ENCODE measurements at regions of chr4 and their contacts with region 1.

Region 1: DNA sequence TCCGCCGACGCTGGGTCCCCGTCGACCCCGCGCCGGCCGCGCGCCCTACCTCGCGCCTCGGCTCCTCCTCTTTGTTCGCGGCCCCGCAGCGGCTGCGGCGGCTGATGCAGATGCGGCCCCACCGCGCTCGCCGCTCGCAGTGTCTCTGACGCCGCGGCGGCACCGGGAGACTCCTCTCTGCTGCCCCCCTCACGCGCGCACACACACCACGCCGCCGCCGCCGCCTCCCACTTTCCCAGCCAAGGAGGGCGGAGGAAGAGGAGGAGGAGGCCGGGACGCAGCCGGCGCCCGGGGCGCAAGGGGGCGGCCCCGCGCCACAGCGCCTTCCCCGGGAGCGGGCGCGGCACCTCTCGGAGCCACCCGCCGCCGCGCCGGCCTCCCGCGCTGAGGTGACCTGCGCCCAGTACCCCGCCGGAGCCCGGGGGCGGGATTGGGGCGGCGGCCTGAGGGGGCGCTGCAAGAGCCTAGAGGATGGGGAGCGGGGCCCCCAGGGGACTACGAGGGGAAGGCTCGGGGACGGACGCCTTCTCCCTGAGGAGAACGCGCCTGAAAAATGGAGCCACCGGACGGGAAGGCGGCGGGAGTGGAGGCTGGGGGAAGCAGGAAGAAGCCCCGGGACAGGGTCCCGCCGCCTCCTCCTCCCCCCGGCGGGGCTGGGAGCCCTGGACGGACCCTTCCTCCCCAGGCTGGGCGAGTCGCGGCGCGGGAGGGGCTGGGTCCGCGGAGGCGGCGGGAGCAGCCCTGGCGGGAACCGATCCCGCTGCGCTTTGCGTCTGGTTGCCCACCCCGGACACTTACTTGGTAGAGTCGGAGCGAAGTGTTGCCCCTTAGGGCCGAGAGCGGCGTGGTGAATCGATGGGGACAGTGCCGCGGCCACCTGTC is at the start of gene SH3RF1:
- DNase-seq: peak; percentile 56
- ATAC-seq: peak; percentile 60
- H3K4me3 Mint-ChIP-seq: peak within 1 kb of the TSS; percentile 89
- H3K27ac Mint-ChIP-seq: peak within 1 kb of the TSS; percentile 75
- H3K4me1 Mint-ChIP-seq: peaks cover 25% of the 10 kb centered on the region
- H3K27me3 Mint-ChIP-seq: peaks cover 4% of the 10 kb centered on the region
- CTCF ChIP-seq: no peak
- total RNA-seq, gene SH3RF1: 6.9 and 7.1 TPM in 2 replicates

Region 2: GRCh38 chr4:168318266-168318895 is 952.7 kb before region 1 on chr4 and contains the start of gene DDX60:
- CTCF ChIA-PET with region 1: no interaction called
- POLR2A ChIA-PET with region 1: no interaction called
- intact Hi-C with region 1: loop called (anchors 5 kb)
- DNase-seq: peak; percentile 68
- ATAC-seq: peak; percentile 92
- H3K4me3 Mint-ChIP-seq: peak within 1 kb of the TSS; percentile 95
- H3K27ac Mint-ChIP-seq: peak within 1 kb of the TSS; percentile 96
- H3K4me1 Mint-ChIP-seq: peaks cover 20% of the 10 kb centered on the region
- H3K27me3 Mint-ChIP-seq: no peaks in the 10 kb centered on the region
- CTCF ChIP-seq: no peak
- total RNA-seq, gene DDX60: 17.6 and 17.9 TPM in 2 replicates

Region 3: DNA sequence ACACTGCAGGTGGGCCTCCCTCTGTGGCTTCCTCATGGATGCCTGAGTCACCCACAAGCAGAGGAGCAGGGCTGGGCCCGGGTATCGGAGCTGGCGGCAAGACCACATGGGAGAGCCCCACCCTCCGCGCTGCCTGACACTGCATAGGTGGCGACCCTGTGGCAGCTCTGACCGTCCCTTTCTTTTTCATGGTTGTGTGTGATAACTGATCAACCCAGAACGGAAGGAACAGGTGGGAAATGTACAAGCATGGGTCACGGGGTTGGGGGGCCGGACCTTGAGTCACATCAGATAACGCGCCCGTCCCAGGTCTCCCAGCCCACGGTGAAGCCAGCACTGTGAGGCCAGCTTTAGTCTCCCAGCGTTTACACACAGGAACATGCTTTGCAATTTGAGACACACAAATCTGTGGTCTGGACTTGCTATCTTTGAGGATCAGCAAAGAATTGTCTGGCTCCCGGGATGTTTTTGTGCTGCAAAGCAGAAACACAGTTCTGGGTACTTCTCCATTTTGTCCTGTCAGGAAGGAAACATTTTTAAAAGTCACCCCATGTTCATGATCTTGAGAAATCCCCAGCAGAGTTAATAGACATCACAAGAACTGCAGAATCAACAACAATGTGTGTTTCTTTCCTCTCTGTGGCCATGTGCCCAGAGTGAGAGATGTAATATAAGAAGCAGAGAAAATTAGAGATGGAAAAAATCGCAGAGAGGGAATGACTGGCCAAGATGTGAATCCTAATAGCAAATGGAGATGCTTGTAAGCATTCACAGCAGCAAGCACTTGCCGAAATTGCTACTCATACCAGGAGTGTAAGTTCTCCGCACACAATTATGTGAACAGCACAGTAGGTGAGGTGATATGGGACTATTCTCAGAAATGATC is 190.9 kb before region 1 on chr4:
- CTCF ChIA-PET with region 1: no interaction called
- POLR2A ChIA-PET with region 1: no interaction called
- intact Hi-C with region 1: loop called (anchors 2 kb)
- DNase-seq: peak; percentile 18
- ATAC-seq: peak; percentile 68
- H3K4me3 Mint-ChIP-seq: peak overlapping the region; percentile 56
- H3K27ac Mint-ChIP-seq: peak overlapping the region; percentile 5
- H3K4me1 Mint-ChIP-seq: peaks cover 25% of the 10 kb centered on the region
- H3K27me3 Mint-ChIP-seq: no peaks in the 10 kb centered on the region
- CTCF ChIP-seq: no peak

Region 4: GRCh38 chr4:169210504-169211118 is 60.4 kb before region 1 on chr4:
- CTCF ChIA-PET with region 1: no interaction called
- POLR2A ChIA-PET with region 1: no interaction called
- intact Hi-C with region 1: loop called (anchors 1 kb)
- DNase-seq: no peak
- ATAC-seq: peak; percentile 88
- H3K4me3 Mint-ChIP-seq: peak overlapping the region; percentile 67
- H3K27ac Mint-ChIP-seq: peak overlapping the region; percentile 89
- H3K4me1 Mint-ChIP-seq: peaks cover 53% of the 10 kb centered on the region
- H3K27me3 Mint-ChIP-seq: no peaks in the 10 kb centered on the region
- CTCF ChIP-seq: no peak

Region 5: GRCh38 chr4:169485791-169486742 is 215.0 kb after region 1 on chr4:
- CTCF ChIA-PET with region 1: interaction called, 3 read pairs
- POLR2A ChIA-PET with region 1: interaction called, 5 read pairs
- intact Hi-C with region 1: loop called (anchors 1 kb)
- DNase-seq: no peak
- ATAC-seq: no peak
- H3K4me3 Mint-ChIP-seq: no peak overlapping the region
- H3K27ac Mint-ChIP-seq: no peak overlapping the region
- H3K4me1 Mint-ChIP-seq: no peaks in the 10 kb centered on the region
- H3K27me3 Mint-ChIP-seq: no peaks in the 10 kb centered on the region
- CTCF ChIP-seq: no peak